ENCODE measurements at regions of chr22 and their contacts with region 1.

Region 1: GRCh38 chr22:22959147-22959827 is 71.7 kb downstream of the IGLL5 start:
- DNase-seq: peak; percentile 86
- ATAC-seq: peak; percentile 78
- H3K4me3 Mint-ChIP-seq: no peak overlapping the region
- H3K27ac Mint-ChIP-seq: no peak overlapping the region
- H3K4me1 Mint-ChIP-seq: no peaks in the 10 kb centered on the region
- H3K27me3 Mint-ChIP-seq: peaks cover 34% of the 10 kb centered on the region

Region 2: DNA sequence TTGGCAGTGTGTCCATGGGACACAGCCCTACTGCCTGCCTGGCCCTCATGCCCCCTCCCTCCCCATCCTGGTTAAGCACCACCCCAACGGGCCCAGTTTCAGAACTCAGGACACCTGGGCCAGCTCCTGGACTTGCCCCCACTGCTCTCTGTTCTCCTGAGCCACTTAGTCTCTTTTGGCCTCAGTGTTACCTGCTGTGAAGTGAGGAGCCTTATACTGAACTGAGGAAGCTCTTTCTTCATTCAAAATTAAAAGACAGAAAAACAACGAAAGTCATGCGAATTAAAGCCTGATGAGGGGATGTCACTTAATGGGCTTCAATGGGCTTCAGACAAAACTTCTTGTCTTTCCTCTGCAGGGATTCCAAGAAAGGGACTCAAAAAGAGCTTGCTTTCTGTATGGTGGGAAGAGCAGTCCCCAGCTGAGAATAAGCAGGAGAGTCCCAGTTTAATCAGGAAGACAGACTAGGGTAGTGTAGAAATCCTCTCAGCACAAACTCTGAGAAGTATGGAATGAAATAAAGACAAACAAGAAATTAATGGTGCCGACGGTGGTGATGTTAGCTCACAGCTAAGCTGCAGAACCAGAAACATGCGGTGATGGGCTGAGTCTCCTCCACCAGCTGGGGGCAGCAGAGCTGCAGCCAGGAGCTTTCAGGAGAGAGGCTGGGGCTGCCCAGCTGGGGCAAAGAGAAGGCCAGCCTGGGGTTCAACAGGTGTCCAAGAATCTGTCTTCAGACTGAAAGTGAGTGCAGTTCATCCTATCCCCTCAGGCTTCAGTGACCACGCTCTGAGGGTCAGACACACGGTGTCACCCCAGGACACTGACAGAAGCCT is 213.8 kb before region 1 on chr22:
- CTCF ChIA-PET with region 1: interaction called, 22 read pairs
- POLR2A ChIA-PET with region 1: no interaction called
- DNase-seq: peak; percentile 57
- ATAC-seq: peak; percentile 74
- H3K4me3 Mint-ChIP-seq: no peak overlapping the region
- H3K27ac Mint-ChIP-seq: no peak overlapping the region
- H3K4me1 Mint-ChIP-seq: no peaks in the 10 kb centered on the region
- H3K27me3 Mint-ChIP-seq: peaks cover 27% of the 10 kb centered on the region

Region 3: GRCh38 chr22:22802339-22802970 is 156.8 kb before region 1 on chr22:
- CTCF ChIA-PET with region 1: interaction called, 14 read pairs
- POLR2A ChIA-PET with region 1: no interaction called
- DNase-seq: peak; percentile 71
- ATAC-seq: peak; percentile 73
- H3K4me3 Mint-ChIP-seq: no peak overlapping the region
- H3K27ac Mint-ChIP-seq: no peak overlapping the region
- H3K4me1 Mint-ChIP-seq: peaks cover 2% of the 10 kb centered on the region
- H3K27me3 Mint-ChIP-seq: peaks cover 22% of the 10 kb centered on the region

Region 4: GRCh38 chr22:22855617-22856308 is 103.5 kb before region 1 on chr22:
- CTCF ChIA-PET with region 1: interaction called, 32 read pairs
- POLR2A ChIA-PET with region 1: no interaction called
- DNase-seq: peak; percentile 56
- ATAC-seq: peak; percentile 83
- H3K4me3 Mint-ChIP-seq: no peak overlapping the region
- H3K27ac Mint-ChIP-seq: no peak overlapping the region
- H3K4me1 Mint-ChIP-seq: no peaks in the 10 kb centered on the region
- H3K27me3 Mint-ChIP-seq: peaks cover 40% of the 10 kb centered on the region

Region 5: DNA sequence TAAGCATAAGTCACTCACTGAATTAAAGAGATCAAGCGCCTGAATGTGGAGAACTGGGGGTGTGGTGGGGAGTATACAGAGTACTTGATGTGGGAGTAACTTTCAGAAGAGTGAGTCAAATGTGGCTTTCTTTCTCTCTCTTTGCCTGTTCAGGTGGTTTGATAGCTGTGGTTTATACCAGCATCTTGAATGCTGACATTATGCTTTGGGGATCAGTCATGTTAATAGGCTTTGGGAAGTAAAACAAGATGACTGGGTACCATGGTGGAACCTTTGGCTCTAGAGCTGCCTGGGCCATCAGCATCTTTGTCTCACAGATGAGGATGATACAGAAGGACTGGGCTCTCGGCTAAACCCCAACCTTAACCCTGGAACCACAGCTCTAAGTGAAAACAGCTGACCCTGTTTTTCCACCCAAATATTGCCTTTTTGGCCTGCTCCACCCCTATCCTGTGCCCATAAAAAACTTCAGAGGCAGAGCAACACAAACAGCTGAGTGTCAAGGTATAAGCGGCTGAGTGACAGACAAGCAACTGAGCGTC is 52.9 kb after region 1 on chr22:
- CTCF ChIA-PET with region 1: interaction called, 11 read pairs
- POLR2A ChIA-PET with region 1: interaction called, 3 read pairs
- DNase-seq: peak; percentile 62
- ATAC-seq: peak; percentile 95
- H3K4me3 Mint-ChIP-seq: no peak overlapping the region
- H3K27ac Mint-ChIP-seq: no peak overlapping the region
- H3K4me1 Mint-ChIP-seq: peaks cover 26% of the 10 kb centered on the region
- H3K27me3 Mint-ChIP-seq: peaks cover 45% of the 10 kb centered on the region

Region 6: DNA sequence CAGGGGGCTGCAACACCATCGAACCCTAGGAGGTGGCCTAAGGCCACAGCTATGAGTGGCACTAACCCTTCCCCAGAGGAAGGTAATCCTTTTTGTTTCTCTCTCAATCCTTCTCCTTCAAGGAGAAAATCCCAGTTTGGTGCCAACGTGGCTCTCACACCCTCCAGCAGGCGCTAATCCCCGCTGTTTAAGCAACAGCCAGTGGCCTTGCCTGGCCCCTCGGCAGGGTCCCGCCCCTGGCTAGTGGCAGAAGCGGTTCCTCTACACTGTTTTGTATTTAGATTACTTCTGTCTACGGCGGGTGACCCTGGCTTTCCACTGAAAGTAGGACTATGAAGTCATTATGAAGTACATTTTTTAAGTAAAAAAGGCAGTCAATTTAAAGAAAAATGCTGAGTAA is 126.5 kb after region 1 on chr22:
- CTCF ChIA-PET with region 1: no interaction called
- POLR2A ChIA-PET with region 1: no interaction called
- DNase-seq: no peak
- ATAC-seq: no peak
- H3K4me3 Mint-ChIP-seq: no peak overlapping the region
- H3K27ac Mint-ChIP-seq: no peak overlapping the region
- H3K4me1 Mint-ChIP-seq: peaks cover 23% of the 10 kb centered on the region
- H3K27me3 Mint-ChIP-seq: peaks cover 15% of the 10 kb centered on the region

Region 7: DNA sequence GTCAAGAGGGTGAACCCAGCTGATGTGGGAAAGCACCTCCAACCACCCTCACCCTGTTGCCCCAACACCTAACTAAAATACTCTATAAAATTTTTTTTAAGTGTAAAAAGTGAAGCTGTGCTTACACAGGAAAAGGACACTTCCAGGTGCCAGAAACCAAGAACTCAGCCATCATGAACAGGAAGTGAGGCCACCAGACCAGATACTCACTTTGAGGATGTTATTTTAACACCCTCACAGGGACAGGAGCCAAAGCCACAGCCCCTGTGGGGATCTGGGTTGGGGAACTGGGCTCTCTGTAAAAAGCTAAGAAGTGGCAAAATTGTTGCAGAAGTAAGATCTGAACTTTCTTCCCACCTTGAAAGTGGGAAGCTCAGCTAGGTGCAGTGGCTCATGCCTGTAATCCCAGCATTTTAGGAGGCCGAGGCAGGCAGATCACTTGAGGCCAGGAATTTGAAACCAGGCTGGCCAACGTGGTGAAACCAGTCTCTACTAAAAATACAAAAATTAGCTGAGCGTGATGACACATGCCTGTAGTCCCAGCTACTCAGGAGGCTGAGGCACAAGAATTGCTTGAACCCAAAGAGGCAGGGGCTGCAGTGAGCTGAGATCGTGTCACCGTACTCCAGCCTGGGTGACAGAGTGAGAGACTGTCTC is 178.7 kb after region 1 on chr22:
- CTCF ChIA-PET with region 1: interaction called, 41 read pairs
- POLR2A ChIA-PET with region 1: no interaction called
- DNase-seq: peak; percentile 75
- ATAC-seq: peak; percentile 38
- H3K4me3 Mint-ChIP-seq: peak overlapping the region; percentile 62
- H3K27ac Mint-ChIP-seq: peak overlapping the region; percentile 98
- H3K4me1 Mint-ChIP-seq: peaks cover 62% of the 10 kb centered on the region
- H3K27me3 Mint-ChIP-seq: no peaks in the 10 kb centered on the region